ENCODE measurements at regions of chr12 and their contacts with region 1.

Region 1: DNA sequence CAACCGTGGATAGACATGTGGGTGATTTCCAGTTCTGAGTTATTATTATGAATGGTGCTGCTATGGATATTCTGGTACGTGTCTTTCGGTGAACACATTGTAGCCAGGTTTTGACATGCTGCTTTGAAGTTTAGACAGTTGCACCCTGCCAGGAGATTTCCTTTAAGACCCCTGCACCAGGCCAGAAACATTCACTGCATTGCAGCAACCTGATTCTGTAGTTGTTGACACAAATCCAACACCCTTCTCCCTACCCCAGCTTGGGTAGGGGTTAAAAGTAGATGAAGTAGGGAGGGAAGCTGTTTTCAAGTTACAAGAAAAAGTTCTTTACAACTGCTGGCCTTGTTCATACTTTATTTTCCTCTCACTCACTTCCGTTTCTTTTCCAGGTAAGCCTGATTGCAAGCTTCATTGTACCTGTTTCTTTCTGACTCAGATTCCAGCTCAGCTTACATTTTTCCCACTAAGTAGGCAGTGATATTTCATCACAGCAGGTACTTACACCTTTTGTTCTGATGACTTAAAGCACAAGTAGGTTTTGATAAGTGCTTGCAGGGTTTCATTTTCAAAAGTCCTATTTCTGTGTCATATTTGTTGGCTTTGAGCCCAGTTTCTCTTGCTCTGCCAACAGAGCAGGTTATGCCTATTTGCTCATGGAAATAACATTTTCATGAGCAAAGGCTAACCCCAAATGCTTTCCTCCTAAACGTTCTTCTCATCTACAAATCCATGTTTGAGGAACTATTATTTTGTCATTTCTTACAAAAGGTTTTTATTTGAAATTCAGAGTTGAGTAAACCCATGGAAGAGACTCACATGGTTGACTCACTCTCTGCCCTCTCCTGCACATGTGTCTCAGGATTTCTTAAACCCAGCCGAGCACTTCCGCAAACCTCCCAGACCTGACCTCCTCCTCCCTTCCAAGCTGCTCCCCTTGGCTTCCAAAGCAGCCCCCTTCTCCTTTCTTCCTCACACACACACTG is 12.1 kb upstream of the LTA4H start:
- DNase-seq: peak; percentile 73
- H3K4me3 Mint-ChIP-seq: peak overlapping the region; percentile 53
- H3K27ac Mint-ChIP-seq: peak overlapping the region; percentile 81
- H3K4me1 Mint-ChIP-seq: peaks cover 38% of the 10 kb centered on the region
- H3K27me3 Mint-ChIP-seq: no peaks in the 10 kb centered on the region

Region 2: DNA sequence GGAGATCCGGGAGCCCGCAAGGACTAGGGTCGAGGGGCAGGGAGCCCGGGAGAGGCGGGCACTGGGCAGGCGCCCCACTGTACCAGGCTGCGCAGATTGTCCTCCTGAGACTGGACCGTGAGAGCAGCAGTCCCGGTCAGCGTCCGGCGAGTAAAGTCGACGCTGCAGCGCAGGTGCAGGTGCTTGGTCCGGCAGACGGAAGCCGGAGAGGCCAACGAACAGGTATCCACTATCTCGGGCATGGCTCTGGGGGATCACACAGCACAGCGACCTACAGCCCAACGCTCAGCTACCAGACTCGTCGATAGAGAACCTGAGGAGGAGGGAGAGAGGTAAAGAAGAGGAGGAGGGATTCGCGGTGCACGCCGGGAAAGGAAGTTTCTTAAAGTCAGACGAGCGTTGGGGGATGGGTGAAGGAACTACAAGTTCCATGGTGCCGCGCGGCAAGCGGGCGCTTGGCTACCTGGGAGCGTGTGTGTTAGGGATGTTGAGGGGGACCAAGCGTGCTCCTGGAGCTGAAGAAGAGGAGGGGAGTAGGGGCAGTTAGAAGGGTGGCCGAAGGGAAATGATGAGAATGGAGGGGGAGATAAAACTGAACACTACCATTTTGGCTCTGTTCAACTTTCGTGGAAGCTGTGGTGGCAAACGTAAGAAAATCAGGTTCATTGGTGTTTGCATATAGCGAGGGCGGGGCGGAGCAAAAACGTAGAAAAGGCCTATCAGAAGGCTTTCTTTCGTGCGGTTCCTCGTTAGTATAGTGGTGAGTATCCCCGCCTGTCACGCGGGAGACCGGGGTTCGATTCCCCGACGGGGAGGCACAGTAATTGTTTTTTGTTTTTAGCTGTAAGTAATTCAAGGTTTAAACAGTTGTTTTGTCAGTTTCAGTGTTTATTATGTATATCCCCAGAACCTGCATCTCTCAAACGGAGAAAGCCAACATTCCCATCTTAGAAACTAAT is 12.0 kb before region 1 on chr12 and contains the start of gene LTA4H:
- intact Hi-C with region 1: loop called (anchors 1 kb)
- DNase-seq: peak; percentile 98
- H3K4me3 Mint-ChIP-seq: no peak within 1 kb of the TSS
- H3K27ac Mint-ChIP-seq: no peak within 1 kb of the TSS
- H3K4me1 Mint-ChIP-seq: peaks cover 6% of the 10 kb centered on the region
- H3K27me3 Mint-ChIP-seq: no peaks in the 10 kb centered on the region
- total RNA-seq, gene LTA4H: 63.4 and 64.1 TPM in 2 replicates

Region 3: GRCh38 chr12:96120359-96121100 is 73.0 kb after region 1 on chr12:
- intact Hi-C with region 1: no loop called
- DNase-seq: no peak
- H3K4me3 Mint-ChIP-seq: no peak overlapping the region
- H3K27ac Mint-ChIP-seq: no peak overlapping the region
- H3K4me1 Mint-ChIP-seq: peaks cover 13% of the 10 kb centered on the region
- H3K27me3 Mint-ChIP-seq: no peaks in the 10 kb centered on the region

Region 4: GRCh38 chr12:96285158-96285557 is 237.6 kb after region 1 on chr12:
- intact Hi-C with region 1: no loop called
- DNase-seq: no peak
- H3K4me3 Mint-ChIP-seq: no peak overlapping the region
- H3K27ac Mint-ChIP-seq: no peak overlapping the region
- H3K4me1 Mint-ChIP-seq: peaks cover 6% of the 10 kb centered on the region
- H3K27me3 Mint-ChIP-seq: no peaks in the 10 kb centered on the region

Region 5: DNA sequence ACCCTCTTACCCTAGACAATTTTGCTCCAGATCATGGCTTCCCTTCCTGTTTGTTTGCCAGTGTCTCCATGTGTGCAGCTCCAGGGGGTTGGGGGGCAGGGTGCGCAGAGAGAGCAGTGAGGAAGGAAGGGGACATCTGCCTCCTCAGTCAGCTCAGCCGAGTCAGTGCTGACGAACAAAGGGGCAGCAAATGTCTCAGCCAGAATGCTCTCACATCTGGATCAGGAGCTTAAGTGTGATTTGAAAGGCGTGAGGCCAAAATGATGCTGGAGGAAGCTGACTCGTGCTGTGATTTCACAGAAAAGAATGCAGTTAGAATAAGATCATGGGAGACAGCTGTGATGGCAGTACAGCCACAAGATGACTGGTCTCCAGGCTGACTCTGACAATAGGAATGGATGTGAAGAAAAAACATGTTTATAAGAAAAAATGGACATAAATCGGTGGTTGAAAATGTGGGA is 379.8 kb after region 1 on chr12:
- intact Hi-C with region 1: loop called (anchors 5 kb)
- DNase-seq: peak; percentile 68
- H3K4me3 Mint-ChIP-seq: peak overlapping the region; percentile 63
- H3K27ac Mint-ChIP-seq: peak overlapping the region; percentile 80
- H3K4me1 Mint-ChIP-seq: peaks cover 37% of the 10 kb centered on the region
- H3K27me3 Mint-ChIP-seq: no peaks in the 10 kb centered on the region